B cell (primary cell): ENCODE measurements at regions of chr18 and their contacts with region 1.

Region 1: GRCh38 chr18:55811925-55812324 is 223.9 kb upstream of the TCF4 start:
- DNase-seq: no peak
- ATAC-seq: no peak
- H3K4me3 ChIP-seq: no peak overlapping the region
- H3K4me3 Mint-ChIP-seq: no peak overlapping the region
- H3K27ac ChIP-seq: no peak overlapping the region
- H3K27ac Mint-ChIP-seq: no peak overlapping the region
- H3K4me1 ChIP-seq: no peaks in the 10 kb centered on the region
- H3K4me1 Mint-ChIP-seq: no peaks in the 10 kb centered on the region
- H3K27me3 ChIP-seq: no peaks in the 10 kb centered on the region
- H3K27me3 Mint-ChIP-seq: no peaks in the 10 kb centered on the region
- CTCF ChIP-seq: no peak

Region 2: GRCh38 chr18:55763298-55763697 is 48.6 kb before region 1 on chr18:
- CTCF ChIA-PET with region 1: no interaction called
- POLR2A ChIA-PET with region 1: no interaction called
- intact Hi-C with region 1: loop called (anchors 10 kb)
- DNase-seq: no peak
- ATAC-seq: no peak
- H3K4me3 ChIP-seq: no peak overlapping the region
- H3K4me3 Mint-ChIP-seq: no peak overlapping the region
- H3K27ac ChIP-seq: no peak overlapping the region
- H3K27ac Mint-ChIP-seq: no peak overlapping the region
- H3K4me1 ChIP-seq: peaks cover 3% of the 10 kb centered on the region in 2 donors
- H3K4me1 Mint-ChIP-seq: peaks cover 6% of the 10 kb centered on the region
- H3K27me3 ChIP-seq: no peaks in the 10 kb centered on the region
- H3K27me3 Mint-ChIP-seq: no peaks in the 10 kb centered on the region
- CTCF ChIP-seq: no peak